ENCODE measurements at regions of chr19 and their contacts with region 1.

Region 1: DNA sequence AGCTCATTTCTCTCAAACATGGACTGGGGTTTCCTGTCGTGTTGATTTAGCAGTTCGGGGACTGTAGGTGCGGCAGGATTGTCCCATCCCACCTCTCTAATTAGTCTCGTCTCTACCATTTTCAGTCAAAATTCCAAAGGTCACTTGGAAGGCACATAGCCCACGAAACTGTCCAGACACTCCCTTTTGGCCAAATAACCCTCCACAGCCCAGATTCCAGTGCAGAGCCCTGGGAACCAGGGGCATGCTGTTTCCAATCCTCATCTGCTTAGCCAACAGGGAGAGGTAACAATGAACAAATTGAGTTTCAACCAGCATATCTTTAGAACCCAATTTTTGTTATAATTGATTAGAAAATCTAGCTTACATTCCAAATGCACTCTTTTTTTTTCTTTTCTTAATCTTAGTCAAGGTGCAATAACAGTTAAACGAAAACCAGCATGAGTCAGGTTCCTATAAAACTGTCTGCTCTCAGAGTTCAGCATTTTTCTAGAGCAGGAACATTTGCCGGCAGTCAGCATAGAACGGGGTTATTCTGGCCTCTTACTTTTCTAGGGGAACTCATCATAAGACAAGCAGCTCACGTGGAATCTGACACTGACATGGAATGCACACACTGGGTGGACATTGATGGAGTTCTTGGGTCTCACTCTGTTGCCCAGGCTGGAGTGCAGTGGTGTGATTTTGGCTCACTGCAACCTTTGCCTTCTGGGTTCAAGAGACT is 14.4 kb upstream of the CEBPA start:
- DNase-seq: no peak
- ATAC-seq: no peak
- H3K4me3 ChIP-seq: no peak overlapping the region
- H3K27ac ChIP-seq: no peak overlapping the region
- H3K4me1 ChIP-seq: no peaks in the 10 kb centered on the region
- H3K27me3 ChIP-seq: peaks cover 0 to 29% (median 7%) of the 10 kb centered on the region in 7 donors
- CTCF ChIP-seq: no peak

Region 2: DNA sequence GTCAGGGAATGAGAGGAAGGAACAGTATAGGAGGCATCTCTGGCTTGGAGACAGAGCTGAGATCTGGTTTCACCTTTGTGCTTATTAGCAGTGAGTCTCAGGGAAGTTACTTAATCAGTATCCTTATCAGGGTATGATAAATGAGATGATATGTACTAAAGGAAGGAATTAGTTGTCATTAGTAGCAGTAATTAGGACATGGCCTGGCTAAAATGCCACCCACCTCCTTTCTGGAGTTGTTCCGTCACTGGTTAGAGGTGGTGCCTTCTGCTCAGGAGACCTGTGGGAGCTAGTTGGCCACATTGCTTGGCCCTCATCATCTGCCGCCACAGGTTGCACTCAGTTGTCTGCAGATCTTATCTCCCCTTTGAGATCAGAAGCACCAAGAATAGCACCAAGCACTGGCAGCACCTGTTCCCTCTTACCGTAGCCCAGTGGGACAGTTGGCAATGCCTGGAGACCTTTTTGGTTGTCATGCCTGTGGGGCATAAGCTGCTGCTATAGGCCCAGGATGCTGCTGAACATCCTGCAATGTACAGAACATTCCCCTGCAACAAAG is 231.1 kb before region 1 on chr19:
- intact Hi-C with region 1: no loop called
- DNase-seq: no peak
- ATAC-seq: no peak
- H3K4me3 ChIP-seq: no peak overlapping the region
- H3K27ac ChIP-seq: no peak overlapping the region
- H3K4me1 ChIP-seq: peaks cover 4 to 15% (median 13%) of the 10 kb centered on the region in 9 donors
- H3K27me3 ChIP-seq: no peaks in the 10 kb centered on the region
- CTCF ChIP-seq: no peak

Region 3: DNA sequence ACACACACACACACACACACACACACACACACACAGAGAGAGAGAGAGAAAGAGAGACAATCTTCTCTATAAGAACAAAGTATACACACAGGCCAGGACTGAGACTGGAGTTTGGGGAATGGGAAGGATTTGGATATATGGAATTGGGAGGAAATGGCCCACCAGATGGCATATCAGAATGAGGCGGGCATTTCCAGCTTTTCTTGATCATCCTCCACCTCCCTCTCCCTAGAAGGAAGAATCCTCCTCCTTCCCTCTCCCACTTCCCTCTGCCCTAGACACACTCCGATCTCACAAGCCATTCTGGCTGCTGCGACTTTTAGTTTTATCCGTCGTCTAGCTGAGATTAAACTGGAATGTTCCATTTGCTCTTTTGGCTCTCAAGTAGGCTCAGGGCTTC is 46.8 kb after region 1 on chr19:
- intact Hi-C with region 1: loop called in 1 of 10 experiments (anchors 5 kb)
- DNase-seq: no peak
- ATAC-seq: no peak
- H3K4me3 ChIP-seq: no peak overlapping the region
- H3K27ac ChIP-seq: no peak overlapping the region
- H3K4me1 ChIP-seq: no peaks in the 10 kb centered on the region
- H3K27me3 ChIP-seq: peaks cover 0 to 27% (median 0%) of the 10 kb centered on the region in 7 donors
- CTCF ChIP-seq: no peak

Region 4: DNA sequence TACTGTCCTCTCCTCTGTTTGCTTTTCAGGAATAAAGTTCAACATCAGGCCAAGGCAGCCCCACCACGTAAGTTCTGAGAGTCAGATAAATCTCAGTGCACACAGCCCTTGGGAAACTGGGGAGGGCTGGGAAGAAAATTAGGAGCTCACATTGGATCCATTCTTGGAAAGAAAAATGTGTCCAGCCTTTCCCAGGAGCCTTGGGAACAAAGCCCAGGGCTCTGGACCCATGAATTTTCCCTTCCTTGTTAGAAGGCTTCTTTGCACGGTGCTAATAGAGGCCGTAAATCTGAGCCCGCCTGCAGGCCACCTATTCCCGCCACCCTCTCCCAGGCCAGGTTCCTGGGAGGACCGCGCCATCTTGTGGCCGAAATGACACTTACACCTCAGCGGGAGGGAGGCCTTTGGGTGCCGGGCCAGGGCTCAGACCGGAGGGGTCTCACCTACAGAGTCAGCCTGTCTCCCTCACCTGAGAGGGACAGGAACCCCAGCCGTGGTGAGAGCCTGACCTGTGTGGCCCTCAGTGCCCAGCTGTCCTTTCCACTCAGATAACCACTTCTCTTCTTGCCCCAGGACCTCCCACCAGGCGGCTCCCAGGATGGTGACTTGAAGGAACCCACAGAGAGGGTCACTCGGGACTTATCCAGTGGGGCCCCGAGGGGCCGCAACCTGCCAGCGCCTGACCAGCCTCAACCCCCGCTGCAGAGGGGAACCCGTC is 454.8 kb after region 1 on chr19:
- intact Hi-C with region 1: no loop called
- DNase-seq: peak; percentile 58 to 74
- ATAC-seq: peak; percentile 63 to 87 (median 77)
- H3K4me3 ChIP-seq: no peak overlapping the region
- H3K27ac ChIP-seq: no peak overlapping the region
- H3K4me1 ChIP-seq: no peaks in the 10 kb centered on the region
- H3K27me3 ChIP-seq: peaks cover 0 to 48% (median 19%) of the 10 kb centered on the region in 7 donors
- CTCF ChIP-seq: peak; percentile 81 to 91 (median 85)